ENCODE measurements at regions of chr22 and their contacts with region 1.

Region 1: DNA sequence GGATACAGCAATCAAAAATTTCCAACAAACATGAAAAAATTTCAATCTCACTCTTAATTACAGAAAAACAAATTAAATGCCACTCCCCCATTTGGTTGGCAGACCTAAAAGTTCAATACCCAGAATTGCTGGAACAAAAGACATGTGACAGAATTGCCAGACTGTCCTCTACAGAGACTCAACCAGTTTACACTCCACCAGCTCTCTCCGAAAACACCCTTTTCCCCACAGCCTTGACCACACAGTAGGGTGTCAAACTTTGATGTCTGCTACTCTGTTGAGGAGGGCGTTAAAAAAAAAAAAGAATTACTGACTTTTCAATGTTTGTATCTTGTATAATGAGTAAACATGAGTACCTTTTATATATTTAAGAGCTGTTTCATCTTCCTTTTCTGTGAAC is 44.7 kb upstream of the YPEL1 start:
- DNase-seq: no peak
- H3K4me3 ChIP-seq: no peak overlapping the region
- H3K27ac ChIP-seq: peak overlapping the region; percentile 88
- H3K4me1 ChIP-seq: peaks cover 56% of the 10 kb centered on the region
- CTCF ChIP-seq: no peak

Region 2: GRCh38 chr22:21745948-21746347 is 34.3 kb before region 1 on chr22:
- CTCF ChIA-PET with region 1: no interaction called
- POLR2A ChIA-PET with region 1: no interaction called
- intact Hi-C with region 1: no loop called
- DNase-seq: no peak
- H3K4me3 ChIP-seq: no peak overlapping the region
- H3K27ac ChIP-seq: no peak overlapping the region
- H3K4me1 ChIP-seq: no peaks in the 10 kb centered on the region
- CTCF ChIP-seq: no peak

Region 3: GRCh38 chr22:21834869-21835268 is 54.6 kb after region 1 on chr22:
- CTCF ChIA-PET with region 1: no interaction called
- POLR2A ChIA-PET with region 1: interaction called, 4 read pairs
- intact Hi-C with region 1: loop called (anchors 2 kb)
- DNase-seq: peak; percentile 90
- H3K4me3 ChIP-seq: peak overlapping the region; percentile 58
- H3K27ac ChIP-seq: peak overlapping the region; percentile 91
- H3K4me1 ChIP-seq: peaks cover 60% of the 10 kb centered on the region
- CTCF ChIP-seq: no peak

Region 4: GRCh38 chr22:21867528-21868266 is 87.4 kb after region 1 on chr22 and contains the start of gene MAPK1:
- CTCF ChIA-PET with region 1: no interaction called
- POLR2A ChIA-PET with region 1: interaction called, 4 read pairs
- intact Hi-C with region 1: loop called (anchors 5 kb)
- DNase-seq: peak; percentile 93
- H3K4me3 ChIP-seq: peak within 1 kb of the TSS; percentile 99
- H3K27ac ChIP-seq: peak within 1 kb of the TSS; percentile 71
- H3K4me1 ChIP-seq: peaks cover 30% of the 10 kb centered on the region
- CTCF ChIP-seq: peak; percentile 65
- total RNA-seq, gene MAPK1: 28.9 and 39.6 TPM in 2 replicates

Region 5: DNA sequence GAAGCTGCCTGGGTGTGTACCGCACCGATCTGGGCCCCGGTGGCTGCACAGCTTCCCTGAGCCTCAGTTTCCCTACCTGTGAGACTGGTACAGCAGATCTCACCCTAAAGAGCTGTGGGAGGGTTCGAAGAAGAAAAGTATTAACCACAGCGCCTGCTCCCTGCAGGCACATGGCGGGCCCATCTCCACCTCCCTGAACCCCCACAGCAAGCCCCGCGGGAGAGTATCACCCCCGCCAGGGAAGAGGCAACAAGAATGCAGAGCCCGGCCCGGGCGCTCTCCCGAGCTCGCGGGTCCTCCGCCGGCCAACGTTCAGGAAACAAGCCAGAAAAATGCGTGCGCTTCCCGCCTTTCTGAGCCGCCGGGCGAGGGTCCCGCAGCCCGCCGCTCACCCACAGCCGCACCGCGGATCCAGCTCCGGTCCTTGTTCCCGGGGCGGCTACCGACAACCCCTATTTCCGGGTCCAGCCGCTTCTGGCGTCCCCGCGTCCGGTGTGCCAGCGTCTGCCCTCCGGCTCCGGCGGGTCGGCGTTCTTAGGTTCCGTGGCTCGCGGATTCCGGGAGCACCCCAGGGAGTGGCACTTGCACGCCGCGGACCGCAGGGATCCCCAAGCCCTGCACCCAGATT is 202.2 kb after region 1 on chr22 and contains the start of gene TOP3B:
- CTCF ChIA-PET with region 1: no interaction called
- POLR2A ChIA-PET with region 1: no interaction called
- intact Hi-C with region 1: no loop called
- DNase-seq: peak; percentile 90
- H3K4me3 ChIP-seq: peak within 1 kb of the TSS; percentile 75
- H3K27ac ChIP-seq: peak within 1 kb of the TSS; percentile 8
- H3K4me1 ChIP-seq: peaks cover 14% of the 10 kb centered on the region
- CTCF ChIP-seq: no peak
- total RNA-seq, gene TOP3B: 65.6 and 82.6 TPM in 2 replicates

Measured in OCI-LY7 (cell line).